ENCODE measurements at regions of chr11 and their contacts with region 1.

Region 1: GRCh38 chr11:118198370-118198769 is 21.9 kb upstream of the SCN2B start:
- DNase-seq: peak; percentile 91 to 94
- H3K4me3 ChIP-seq: no peak overlapping the region
- H3K4me3 Mint-ChIP-seq: peak overlapping the region; percentile 2
- H3K27ac Mint-ChIP-seq: peak overlapping the region; percentile 36
- H3K4me1 ChIP-seq: peaks cover 85% of the 10 kb centered on the region
- H3K4me1 Mint-ChIP-seq: peaks cover 44% of the 10 kb centered on the region
- H3K27me3 ChIP-seq: no peaks in the 10 kb centered on the region
- H3K27me3 Mint-ChIP-seq: no peaks in the 10 kb centered on the region
- CTCF ChIP-seq: peak; percentile 99

Region 2: DNA sequence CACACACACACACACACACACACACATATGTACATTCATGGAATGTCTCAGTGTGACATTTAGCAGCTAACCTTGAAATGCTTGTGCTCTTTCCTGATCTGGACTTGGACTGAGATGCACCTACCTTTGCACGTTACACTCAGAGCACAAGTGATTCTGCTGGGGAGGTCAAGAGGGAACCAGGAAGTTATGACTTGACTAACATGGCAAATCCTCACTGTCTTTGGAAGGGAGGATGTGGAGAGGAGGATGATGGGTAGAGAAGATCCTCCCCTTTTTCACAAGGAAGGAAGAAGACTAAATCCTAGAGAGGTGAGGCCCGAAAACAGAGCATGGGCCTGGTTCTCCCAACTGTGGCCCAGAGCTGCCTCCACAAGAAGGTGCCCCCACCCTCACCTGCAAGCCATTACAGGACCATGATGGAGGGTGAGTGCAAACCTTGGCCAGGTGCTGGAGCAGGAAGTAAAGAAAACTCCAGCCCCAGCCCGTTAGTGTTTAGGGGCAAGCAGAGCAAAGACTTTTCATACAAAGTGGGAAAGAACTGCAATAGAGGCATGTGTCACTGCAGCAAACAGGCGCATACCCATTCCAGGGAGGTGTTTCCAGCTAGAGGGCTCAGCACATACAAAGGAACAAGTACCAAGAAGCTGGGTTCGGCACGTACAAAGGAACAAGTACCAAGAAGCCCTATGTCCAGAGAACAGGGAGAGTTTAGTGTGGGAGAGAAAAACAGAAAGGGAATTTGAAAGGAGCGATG is 72.1 kb before region 1 on chr11:
- CTCF ChIA-PET with region 1: no interaction called
- POLR2A ChIA-PET with region 1: no interaction called
- intact Hi-C with region 1: no loop called
- DNase-seq: peak; percentile 36 to 76
- H3K4me3 ChIP-seq: no peak overlapping the region
- H3K4me3 Mint-ChIP-seq: no peak overlapping the region
- H3K27ac Mint-ChIP-seq: no peak overlapping the region
- H3K4me1 ChIP-seq: no peaks in the 10 kb centered on the region
- H3K4me1 Mint-ChIP-seq: no peaks in the 10 kb centered on the region
- H3K27me3 ChIP-seq: no peaks in the 10 kb centered on the region; the same call in 1 of the 2 replicates
- H3K27me3 Mint-ChIP-seq: no peaks in the 10 kb centered on the region
- CTCF ChIP-seq: no peak

Region 3: GRCh38 chr11:118171269-118172062 is 26.9 kb before region 1 on chr11:
- CTCF ChIA-PET with region 1: interaction called, 12 read pairs
- POLR2A ChIA-PET with region 1: no interaction called
- intact Hi-C with region 1: loop called (anchors 1 kb)
- DNase-seq: peak; percentile 82 to 89
- H3K4me3 ChIP-seq: no peak overlapping the region
- H3K4me3 Mint-ChIP-seq: no peak overlapping the region
- H3K27ac Mint-ChIP-seq: no peak overlapping the region
- H3K4me1 ChIP-seq: peaks cover 3% of the 10 kb centered on the region; the same call in 1 of the 2 replicates
- H3K4me1 Mint-ChIP-seq: peaks cover 24% of the 10 kb centered on the region
- H3K27me3 ChIP-seq: no peaks in the 10 kb centered on the region; the same call in 1 of the 2 replicates
- H3K27me3 Mint-ChIP-seq: no peaks in the 10 kb centered on the region
- CTCF ChIP-seq: peak; percentile 98 to 99

Region 4: GRCh38 chr11:118240999-118241768 is 42.8 kb after region 1 on chr11:
- CTCF ChIA-PET with region 1: interaction called, 21 read pairs
- POLR2A ChIA-PET with region 1: interaction called, 3 read pairs
- intact Hi-C with region 1: loop called (anchors 1 kb)
- DNase-seq: peak; percentile 68 to 71
- H3K4me3 ChIP-seq: no peak overlapping the region
- H3K4me3 Mint-ChIP-seq: peak overlapping the region; percentile 42
- H3K27ac Mint-ChIP-seq: peak overlapping the region; percentile 82
- H3K4me1 ChIP-seq: peaks cover 69% of the 10 kb centered on the region
- H3K4me1 Mint-ChIP-seq: peaks cover 65% of the 10 kb centered on the region
- H3K27me3 ChIP-seq: no peaks in the 10 kb centered on the region
- H3K27me3 Mint-ChIP-seq: no peaks in the 10 kb centered on the region
- CTCF ChIP-seq: no peak

Region 5: DNA sequence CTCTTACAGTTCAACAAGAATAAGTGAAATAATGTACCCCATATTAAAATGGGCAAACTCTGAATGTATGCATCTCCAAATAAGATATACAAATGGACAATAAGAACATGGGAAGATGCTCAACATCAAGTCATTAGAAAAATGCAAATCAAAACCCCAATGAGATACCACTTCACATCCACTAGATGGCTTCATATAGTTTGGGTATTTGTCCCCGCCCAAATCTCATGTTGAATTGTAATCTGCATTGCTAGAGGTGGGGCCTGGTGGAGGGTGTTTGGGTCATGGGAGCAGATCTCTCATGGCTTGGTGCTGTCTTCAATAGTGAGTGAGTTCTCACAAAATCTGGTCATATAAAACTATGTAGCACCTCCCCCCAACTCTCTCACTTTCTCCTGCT is 60.0 kb after region 1 on chr11:
- CTCF ChIA-PET with region 1: interaction called, 34 read pairs
- POLR2A ChIA-PET with region 1: interaction called, 3 read pairs
- intact Hi-C with region 1: loop called (anchors 1 kb)
- DNase-seq: peak in 1 of 2 experiments; percentile 50
- H3K4me3 ChIP-seq: no peak overlapping the region
- H3K4me3 Mint-ChIP-seq: no peak overlapping the region
- H3K27ac Mint-ChIP-seq: no peak overlapping the region
- H3K4me1 ChIP-seq: peaks cover 5% of the 10 kb centered on the region; the same call in 1 of the 2 replicates
- H3K4me1 Mint-ChIP-seq: peaks cover 5% of the 10 kb centered on the region
- H3K27me3 ChIP-seq: no peaks in the 10 kb centered on the region
- H3K27me3 Mint-ChIP-seq: no peaks in the 10 kb centered on the region
- CTCF ChIP-seq: peak; percentile 54 to 62

Region 6: DNA sequence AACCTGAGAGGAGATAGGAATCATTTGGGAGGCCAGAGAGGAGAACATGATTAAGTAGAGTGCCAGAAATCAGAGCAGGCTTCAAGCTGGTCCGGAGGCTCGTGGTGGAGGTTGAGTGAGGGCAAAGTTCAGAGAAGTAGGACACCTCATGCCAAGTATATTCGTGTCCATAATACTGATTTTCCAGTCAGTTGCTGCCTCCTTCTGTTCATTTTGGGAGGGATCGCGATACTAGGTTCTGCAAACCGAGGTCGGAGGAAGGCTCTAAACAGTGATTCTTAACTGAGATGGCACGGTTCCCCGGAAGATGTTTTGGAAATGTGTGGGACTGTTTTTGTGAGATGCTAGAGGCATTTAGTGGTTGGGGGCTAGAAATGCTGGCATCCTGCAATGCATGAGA is 92.6 kb after region 1 on chr11:
- CTCF ChIA-PET with region 1: interaction called, 41 read pairs
- POLR2A ChIA-PET with region 1: no interaction called
- intact Hi-C with region 1: loop called (anchors 1 kb)
- DNase-seq: peak; percentile 80 to 82
- H3K4me3 ChIP-seq: no peak overlapping the region
- H3K4me3 Mint-ChIP-seq: no peak overlapping the region
- H3K27ac Mint-ChIP-seq: no peak overlapping the region
- H3K4me1 ChIP-seq: peaks cover 9% of the 10 kb centered on the region
- H3K4me1 Mint-ChIP-seq: peaks cover 24% of the 10 kb centered on the region
- H3K27me3 ChIP-seq: no peaks in the 10 kb centered on the region
- H3K27me3 Mint-ChIP-seq: no peaks in the 10 kb centered on the region
- CTCF ChIP-seq: peak; percentile 61 to 70

Region 7: DNA sequence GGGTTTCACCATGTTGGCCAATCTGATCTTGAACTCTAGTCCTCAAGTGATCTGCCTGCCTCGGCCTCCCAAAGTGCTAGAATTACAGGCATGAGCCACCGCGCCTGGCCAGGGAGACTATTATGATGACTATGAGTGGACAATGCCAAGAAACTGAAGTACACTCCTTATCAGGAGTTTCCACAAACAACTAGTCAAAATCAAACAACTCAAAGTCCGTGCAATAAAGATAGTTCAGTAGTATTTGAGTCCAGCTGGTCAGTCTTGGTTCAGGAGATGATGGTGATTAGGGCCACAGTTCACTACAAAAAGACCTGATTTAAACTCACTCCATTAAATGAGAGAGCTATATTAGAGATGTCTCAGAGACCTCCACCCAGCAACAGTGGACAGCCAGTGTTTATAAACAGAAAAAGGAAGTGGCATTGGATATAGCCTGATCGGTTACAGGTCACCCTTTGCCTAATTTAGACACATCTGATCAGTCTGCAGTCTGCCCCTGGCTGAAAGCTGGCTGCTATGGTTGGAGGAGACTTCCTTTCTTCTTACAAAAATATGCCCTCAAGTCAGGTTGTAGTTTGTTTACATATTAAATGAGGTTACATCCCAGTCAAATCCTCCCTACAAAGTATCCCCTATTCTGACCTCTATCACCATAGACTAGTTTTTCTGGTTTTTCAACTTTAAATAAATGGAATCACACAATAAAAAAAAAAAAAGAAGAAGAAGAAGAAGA is 123.2 kb after region 1 on chr11:
- CTCF ChIA-PET with region 1: interaction called, 4 read pairs
- POLR2A ChIA-PET with region 1: no interaction called
- intact Hi-C with region 1: loop called (anchors 1 kb)
- DNase-seq: peak; percentile 84
- H3K4me3 ChIP-seq: no peak overlapping the region
- H3K4me3 Mint-ChIP-seq: peak overlapping the region; percentile 59
- H3K27ac Mint-ChIP-seq: peak overlapping the region; percentile 83
- H3K4me1 ChIP-seq: peaks cover 64% of the 10 kb centered on the region
- H3K4me1 Mint-ChIP-seq: peaks cover 41% of the 10 kb centered on the region
- H3K27me3 ChIP-seq: no peaks in the 10 kb centered on the region
- H3K27me3 Mint-ChIP-seq: no peaks in the 10 kb centered on the region
- CTCF ChIP-seq: no peak